Endothelial cell of umbilical vein (primary cell): ENCODE measurements at regions of chr10 and their contacts with region 1.

Region 1: DNA sequence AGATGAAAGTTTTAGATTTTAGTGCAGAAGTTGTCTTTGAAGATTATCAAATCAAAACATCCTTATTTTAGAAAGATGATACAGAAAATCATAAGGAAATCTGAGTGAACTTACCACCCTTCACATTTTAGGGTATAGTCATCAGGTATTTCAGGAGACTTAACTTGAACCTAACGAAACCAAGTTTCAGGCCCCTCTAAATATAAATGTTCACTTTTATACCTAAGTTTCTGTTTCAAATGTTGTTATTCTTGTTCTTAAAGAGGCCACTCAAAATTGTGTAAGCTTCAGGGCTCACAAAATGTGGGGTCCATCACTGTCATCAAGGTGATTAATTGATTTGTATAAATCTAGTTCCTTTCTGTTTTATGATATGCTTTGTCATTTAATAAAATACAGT is 216.2 kb downstream of the KIAA1217 start:
- DNase-seq: no peak
- H3K4me3 ChIP-seq: no peak overlapping the region
- H3K27ac ChIP-seq: no peak overlapping the region
- H3K4me1 ChIP-seq: no peaks in the 10 kb centered on the region
- H3K27me3 ChIP-seq: no peaks in the 10 kb centered on the region
- CTCF ChIP-seq: no peak
- POLR2A ChIP-seq: no peak

Region 2: DNA sequence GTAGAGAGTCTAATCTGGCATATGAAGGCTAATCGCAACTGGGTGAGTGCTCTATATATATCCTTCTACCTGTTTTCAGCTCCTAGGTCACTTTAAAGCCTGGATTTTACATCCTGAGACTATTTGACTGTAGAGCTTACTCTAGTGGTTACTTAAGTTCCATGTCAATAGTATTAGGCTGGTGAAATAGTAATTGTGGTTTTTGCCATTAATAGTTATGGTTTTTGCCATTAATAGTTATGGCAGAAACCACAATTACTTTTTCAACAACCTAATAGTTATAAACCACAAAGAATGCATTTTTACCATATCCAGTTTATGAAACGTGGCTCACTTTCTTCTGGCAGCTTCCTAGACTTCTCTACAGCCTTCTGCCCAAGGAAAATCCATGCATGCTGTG is 479.3 kb before region 1 on chr10:
- CTCF ChIA-PET with region 1: no interaction called
- POLR2A ChIA-PET with region 1: no interaction called
- dilution Hi-C with region 1: no loop called
- intact Hi-C with region 1: no loop called
- DNase-seq: no peak
- H3K4me3 ChIP-seq: no peak overlapping the region
- H3K27ac ChIP-seq: no peak overlapping the region
- H3K4me1 ChIP-seq: no peaks in the 10 kb centered on the region
- H3K27me3 ChIP-seq: no peaks in the 10 kb centered on the region
- CTCF ChIP-seq: no peak
- POLR2A ChIP-seq: no peak

Region 3: DNA sequence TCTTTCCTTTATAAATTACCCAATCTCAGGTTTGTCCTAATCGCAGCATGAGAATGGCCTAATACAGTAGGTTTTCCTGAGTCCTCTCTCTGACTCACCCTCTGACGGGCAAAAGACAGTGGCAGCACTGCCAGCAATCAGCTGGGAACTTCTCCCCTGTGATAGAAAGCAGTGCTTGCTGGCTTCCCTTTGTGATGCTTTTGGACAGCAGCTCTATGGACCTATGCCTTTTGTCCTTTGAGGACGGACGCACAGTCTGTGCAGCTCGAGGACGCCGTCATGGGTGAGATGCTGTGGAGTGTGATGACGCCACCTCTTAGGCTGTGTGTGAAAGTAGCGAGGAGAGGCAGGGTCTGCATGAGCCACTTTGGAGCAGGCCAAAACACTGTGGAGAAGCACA is 147.4 kb before region 1 on chr10:
- CTCF ChIA-PET with region 1: no interaction called
- POLR2A ChIA-PET with region 1: no interaction called
- dilution Hi-C with region 1: no loop called
- intact Hi-C with region 1: no loop called
- DNase-seq: no peak
- H3K4me3 ChIP-seq: no peak overlapping the region
- H3K27ac ChIP-seq: no peak overlapping the region
- H3K4me1 ChIP-seq: no peaks in the 10 kb centered on the region
- H3K27me3 ChIP-seq: no peaks in the 10 kb centered on the region
- CTCF ChIP-seq: no peak
- POLR2A ChIP-seq: no peak

Region 4: DNA sequence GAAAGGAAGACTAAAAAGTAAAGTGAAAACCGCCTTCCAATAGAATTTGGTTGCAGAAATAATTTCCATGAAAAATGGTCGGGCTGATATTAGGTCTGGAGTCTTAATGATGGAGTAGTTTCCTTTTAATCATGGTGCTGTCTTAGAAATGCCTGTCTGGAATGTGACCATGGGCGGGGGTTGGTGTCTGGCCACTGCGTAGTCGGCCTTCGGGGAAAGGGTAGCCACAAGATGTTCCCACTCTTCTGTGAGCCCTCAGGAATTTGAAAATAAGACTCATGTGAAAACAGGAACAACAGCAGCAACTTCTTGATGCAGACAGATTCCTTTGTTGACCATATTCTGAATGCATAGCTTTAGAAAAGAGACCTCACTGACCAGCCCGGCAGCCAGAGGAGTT is 39.4 kb before region 1 on chr10:
- CTCF ChIA-PET with region 1: no interaction called
- POLR2A ChIA-PET with region 1: no interaction called
- dilution Hi-C with region 1: no loop called
- intact Hi-C with region 1: no loop called
- DNase-seq: no peak
- H3K4me3 ChIP-seq: no peak overlapping the region
- H3K27ac ChIP-seq: no peak overlapping the region
- H3K4me1 ChIP-seq: no peaks in the 10 kb centered on the region
- H3K27me3 ChIP-seq: no peaks in the 10 kb centered on the region
- CTCF ChIP-seq: no peak
- POLR2A ChIP-seq: no peak

Region 5: GRCh38 chr10:24518981-24519597 is 93.9 kb after region 1 on chr10:
- CTCF ChIA-PET with region 1: no interaction called
- POLR2A ChIA-PET with region 1: no interaction called
- dilution Hi-C with region 1: no loop called
- intact Hi-C with region 1: loop called (anchors 1 kb)
- DNase-seq: peak; percentile 50
- H3K4me3 ChIP-seq: no peak overlapping the region
- H3K27ac ChIP-seq: no peak overlapping the region
- H3K4me1 ChIP-seq: no peaks in the 10 kb centered on the region
- H3K27me3 ChIP-seq: no peaks in the 10 kb centered on the region
- CTCF ChIP-seq: peak; percentile 72 to 76
- POLR2A ChIP-seq: no peak